Activated naive CD4-positive, alpha-beta T cell treated with anti-CD3 and anti-CD28 coated beads for 36 hours (primary cell): ENCODE measurements at regions of chr7 and their contacts with region 1.

Region 1: DNA sequence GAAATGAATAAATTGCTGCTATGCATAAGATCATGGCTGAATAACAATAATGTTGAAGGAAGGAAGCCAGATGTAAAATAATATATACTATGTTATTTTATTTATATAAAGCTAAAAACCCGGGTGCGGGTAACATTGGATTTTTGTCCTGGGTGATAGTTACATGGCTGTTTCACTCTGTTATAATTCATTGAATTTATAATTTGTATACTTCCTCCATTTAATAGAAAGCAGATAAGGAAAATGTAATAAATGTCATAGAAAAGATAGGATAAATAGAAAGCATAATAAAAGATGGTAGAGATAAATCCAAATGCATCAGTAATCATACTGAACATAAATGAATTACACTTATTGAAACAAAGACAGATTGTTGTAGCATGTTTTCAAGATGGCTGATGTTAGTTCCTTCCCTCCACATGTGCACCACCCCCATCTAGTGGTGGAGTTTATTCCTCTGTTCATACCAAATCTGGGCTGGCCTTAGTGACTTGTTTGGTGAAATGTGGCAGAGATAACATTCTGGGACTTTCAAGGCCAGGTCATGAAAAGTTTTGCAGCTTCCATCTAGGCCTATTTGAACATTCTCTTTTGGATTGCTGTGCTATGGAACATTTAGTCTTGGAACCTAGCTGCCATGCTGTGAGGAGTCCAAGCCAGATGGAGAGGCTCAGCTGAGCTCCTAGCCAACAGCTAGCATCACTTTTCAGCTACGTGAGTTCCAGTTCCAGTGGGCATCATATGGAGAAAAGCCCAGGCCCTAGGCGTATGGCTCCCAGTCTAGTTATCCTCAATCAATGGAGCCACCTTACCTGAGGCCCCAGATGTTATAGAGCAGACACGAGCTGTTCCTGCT is 46.9 kb downstream of the AHCYL2 start:
- DNase-seq: peak; percentile 84
- H3K4me3 Mint-ChIP-seq: peak overlapping the region; percentile 63
- H3K27ac Mint-ChIP-seq: peak overlapping the region; percentile 73
- H3K4me1 Mint-ChIP-seq: peaks cover 9% of the 10 kb centered on the region
- H3K27me3 Mint-ChIP-seq: no peaks in the 10 kb centered on the region

Region 2: GRCh38 chr7:129163875-129164544 is 107.7 kb before region 1 on chr7:
- CTCF ChIA-PET with region 1: interaction called, 9 read pairs
- intact Hi-C with region 1: loop called (anchors 1 kb)
- DNase-seq: peak; percentile 21
- H3K4me3 Mint-ChIP-seq: no peak overlapping the region
- H3K27ac Mint-ChIP-seq: no peak overlapping the region
- H3K4me1 Mint-ChIP-seq: peaks cover 4% of the 10 kb centered on the region
- H3K27me3 Mint-ChIP-seq: no peaks in the 10 kb centered on the region

Region 3: GRCh38 chr7:129224251-129225205 is 47.2 kb before region 1 on chr7 and contains the start of gene AHCYL2:
- CTCF ChIA-PET with region 1: interaction called, 234 read pairs
- intact Hi-C with region 1: loop called (anchors 1 kb)
- DNase-seq: peak; percentile 99
- H3K4me3 Mint-ChIP-seq: peak within 1 kb of the TSS; percentile 88
- H3K27ac Mint-ChIP-seq: peak within 1 kb of the TSS; percentile 90
- H3K4me1 Mint-ChIP-seq: peaks cover 31% of the 10 kb centered on the region
- H3K27me3 Mint-ChIP-seq: no peaks in the 10 kb centered on the region
- total RNA-seq, gene AHCYL2: 29.1 to 30.4 TPM

Region 4: DNA sequence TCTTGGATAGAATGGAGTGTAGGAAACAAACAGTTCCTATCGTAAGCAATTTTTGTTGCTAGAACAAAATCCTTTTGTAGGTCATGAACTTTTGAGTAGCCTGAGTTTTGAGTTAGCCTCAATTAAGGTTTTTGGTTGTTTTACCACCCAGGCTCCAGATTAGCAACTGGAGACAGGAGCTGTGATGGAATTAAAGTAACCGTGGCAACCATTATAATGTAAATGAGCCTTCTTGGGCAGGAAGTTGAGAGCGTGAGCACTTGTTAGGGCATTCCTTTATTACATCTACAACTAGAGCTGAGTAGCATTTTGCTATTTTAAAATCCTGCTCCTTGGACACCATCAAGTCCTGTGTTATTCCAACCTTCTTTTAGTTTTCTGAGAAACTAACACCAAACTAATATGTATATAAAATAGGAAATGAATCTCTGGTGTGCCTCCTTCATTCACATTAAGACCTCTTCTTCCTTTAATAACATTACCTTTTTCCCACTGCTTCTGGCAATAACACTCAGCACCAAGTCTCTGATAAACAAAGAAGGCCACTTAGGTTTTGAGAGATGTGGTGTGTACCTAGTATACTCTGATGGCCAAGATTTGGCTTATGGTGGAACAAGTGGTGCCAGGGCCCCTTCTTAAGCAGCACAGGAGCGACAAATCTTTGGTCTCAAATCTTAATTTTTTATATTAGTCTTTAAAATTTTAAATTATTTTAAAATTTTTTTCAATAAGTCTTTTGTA is 12.9 kb before region 1 on chr7:
- CTCF ChIA-PET with region 1: interaction called, 39 read pairs
- intact Hi-C with region 1: no loop called
- DNase-seq: no peak
- H3K4me3 Mint-ChIP-seq: no peak overlapping the region
- H3K27ac Mint-ChIP-seq: no peak overlapping the region
- H3K4me1 Mint-ChIP-seq: peaks cover 32% of the 10 kb centered on the region
- H3K27me3 Mint-ChIP-seq: no peaks in the 10 kb centered on the region

Region 5: GRCh38 chr7:129298268-129298893 is 26.7 kb after region 1 on chr7:
- CTCF ChIA-PET with region 1: interaction called, 10 read pairs
- intact Hi-C with region 1: no loop called
- DNase-seq: peak; percentile 82
- H3K4me3 Mint-ChIP-seq: no peak overlapping the region
- H3K27ac Mint-ChIP-seq: no peak overlapping the region
- H3K4me1 Mint-ChIP-seq: no peaks in the 10 kb centered on the region
- H3K27me3 Mint-ChIP-seq: no peaks in the 10 kb centered on the region

Region 6: GRCh38 chr7:129417071-129417470 is 145.3 kb after region 1 on chr7:
- CTCF ChIA-PET with region 1: no interaction called
- intact Hi-C with region 1: no loop called
- DNase-seq: no peak
- H3K4me3 Mint-ChIP-seq: no peak overlapping the region
- H3K27ac Mint-ChIP-seq: no peak overlapping the region
- H3K4me1 Mint-ChIP-seq: peaks cover 2% of the 10 kb centered on the region
- H3K27me3 Mint-ChIP-seq: no peaks in the 10 kb centered on the region